ENCODE measurements at regions of chr20 and their contacts with region 1.

Region 1: GRCh38 chr20:21571841-21572690 is 58.2 kb upstream of the NKX2-2 start:
- DNase-seq: no peak
- ATAC-seq: no peak

Region 2: DNA sequence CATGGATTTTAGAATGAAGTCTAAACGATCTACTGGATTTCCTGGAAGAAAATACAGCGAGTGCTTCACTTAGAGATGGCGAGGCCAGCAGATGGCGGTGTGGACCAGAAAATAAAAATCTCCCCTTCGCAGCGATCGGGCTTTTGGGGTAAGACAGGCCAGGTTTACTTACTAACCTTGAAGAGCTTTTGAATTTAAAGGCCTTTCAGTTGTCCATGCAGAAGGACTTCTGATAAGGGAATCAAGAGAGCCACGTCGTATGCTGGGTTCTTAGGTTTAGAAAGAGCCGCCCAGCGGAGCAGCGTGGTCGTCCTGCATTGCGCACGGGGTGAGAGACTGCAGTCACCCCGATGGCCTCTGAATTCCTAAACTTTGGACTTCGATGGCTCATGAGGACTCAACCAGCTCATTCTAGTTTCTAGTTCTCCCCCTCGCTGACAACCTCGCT is 734.5 kb before region 1 on chr20:
- intact Hi-C with region 1: loop called (anchors 5 kb)
- DNase-seq: peak; percentile 73
- ATAC-seq: peak; percentile 54

Measured in Right ventricle myocardium inferior (tissue), 1 donor.